OCI-LY7 (cell line): ENCODE measurements at regions of chr13 and their contacts with region 1.

Region 1: GRCh38 chr13:109786457-109787134 is at the start of gene IRS2:
- DNase-seq: peak; percentile 86
- H3K4me3 ChIP-seq: peak within 1 kb of the TSS; percentile 74
- H3K27ac ChIP-seq: peak within 1 kb of the TSS; percentile 11
- H3K4me1 ChIP-seq: no peaks in the 10 kb centered on the region
- CTCF ChIP-seq: no peak
- total RNA-seq, gene IRS2: 0.63 and 0.77 TPM in 2 replicates

Region 2: GRCh38 chr13:108961542-108962125 is 825.0 kb before region 1 on chr13:
- CTCF ChIA-PET with region 1: no interaction called
- POLR2A ChIA-PET with region 1: no interaction called
- intact Hi-C with region 1: loop called (anchors 1 kb)
- DNase-seq: peak; percentile 47
- H3K4me3 ChIP-seq: no peak overlapping the region
- H3K27ac ChIP-seq: no peak overlapping the region
- H3K4me1 ChIP-seq: no peaks in the 10 kb centered on the region
- CTCF ChIP-seq: peak; percentile 79

Region 3: DNA sequence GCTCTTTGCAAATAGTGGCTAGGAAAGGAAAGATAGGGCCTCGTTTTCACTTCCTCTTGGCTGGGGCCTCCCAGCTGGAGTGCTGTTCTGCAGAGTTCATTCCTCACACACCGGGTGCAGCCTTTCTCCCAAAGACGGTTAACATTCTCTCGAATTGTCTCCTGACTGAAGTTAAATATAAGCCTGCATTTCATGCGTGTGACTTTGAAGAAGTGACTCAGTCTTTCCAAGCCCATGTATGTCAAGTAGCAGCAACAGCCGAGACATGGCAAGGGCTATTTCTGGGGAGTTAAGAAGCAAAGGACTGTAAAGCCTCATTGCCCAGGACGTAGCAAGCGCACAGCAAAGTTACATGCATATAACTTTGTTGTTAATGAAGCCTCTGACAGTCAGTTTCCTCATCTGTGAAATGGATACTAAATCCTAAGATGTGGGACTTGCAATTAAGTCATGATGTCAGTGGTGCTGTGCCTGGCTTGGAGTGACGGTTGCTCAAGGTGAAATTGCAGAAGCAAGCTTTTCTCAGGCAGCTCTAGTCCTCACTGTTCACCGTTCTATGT is 654.8 kb before region 1 on chr13:
- CTCF ChIA-PET with region 1: no interaction called
- POLR2A ChIA-PET with region 1: no interaction called
- intact Hi-C with region 1: loop called (anchors 10 kb)
- DNase-seq: peak; percentile 58
- H3K4me3 ChIP-seq: peak overlapping the region; percentile 46
- H3K27ac ChIP-seq: peak overlapping the region; percentile 61
- H3K4me1 ChIP-seq: peaks cover 60% of the 10 kb centered on the region
- CTCF ChIP-seq: no peak

Region 4: DNA sequence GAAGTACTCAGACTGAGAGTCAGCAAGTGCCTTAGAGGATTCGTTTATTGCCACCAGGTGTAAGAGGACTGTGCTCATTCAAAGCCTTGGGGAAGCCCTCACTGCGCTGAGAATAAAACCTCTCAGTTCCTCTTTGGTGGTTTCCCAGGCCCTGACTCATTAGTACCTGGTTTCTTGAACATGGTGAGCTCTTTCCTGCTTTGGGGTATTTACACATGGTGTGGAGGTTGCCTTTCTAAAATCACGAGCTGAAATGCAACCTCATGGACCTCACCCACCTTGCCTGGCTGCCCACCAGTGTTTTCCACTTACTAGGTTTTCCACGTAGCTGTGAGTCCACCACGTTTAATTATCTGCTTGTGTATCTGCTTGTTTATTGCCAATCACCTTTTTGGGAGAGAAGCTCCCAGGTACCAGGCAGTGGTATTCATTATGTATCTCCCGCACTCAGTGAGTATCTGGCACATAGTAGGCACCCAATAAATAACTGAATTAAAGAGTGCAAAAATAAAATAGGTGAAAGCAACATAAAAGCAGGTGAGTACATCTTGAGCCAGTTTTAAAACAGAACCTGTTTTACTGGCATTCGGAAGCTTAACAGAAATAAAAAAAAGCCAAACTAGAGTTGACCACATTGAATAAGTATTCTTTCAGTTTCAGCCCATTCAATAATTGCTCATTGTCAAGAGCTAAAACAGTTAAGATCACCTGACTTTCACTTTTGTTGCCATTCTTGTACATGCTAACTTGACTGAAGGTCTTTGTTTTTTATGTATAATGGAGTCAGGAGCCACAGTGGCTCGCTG is 624.1 kb before region 1 on chr13:
- CTCF ChIA-PET with region 1: no interaction called
- POLR2A ChIA-PET with region 1: no interaction called
- intact Hi-C with region 1: loop called (anchors 2 kb)
- DNase-seq: peak; percentile 89
- H3K4me3 ChIP-seq: peak overlapping the region; percentile 65
- H3K27ac ChIP-seq: peak overlapping the region; percentile 88
- H3K4me1 ChIP-seq: peaks cover 68% of the 10 kb centered on the region
- CTCF ChIP-seq: no peak